HepG2 (cell line): ENCODE measurements at regions of chr21 and their contacts with region 1.

Region 1: DNA sequence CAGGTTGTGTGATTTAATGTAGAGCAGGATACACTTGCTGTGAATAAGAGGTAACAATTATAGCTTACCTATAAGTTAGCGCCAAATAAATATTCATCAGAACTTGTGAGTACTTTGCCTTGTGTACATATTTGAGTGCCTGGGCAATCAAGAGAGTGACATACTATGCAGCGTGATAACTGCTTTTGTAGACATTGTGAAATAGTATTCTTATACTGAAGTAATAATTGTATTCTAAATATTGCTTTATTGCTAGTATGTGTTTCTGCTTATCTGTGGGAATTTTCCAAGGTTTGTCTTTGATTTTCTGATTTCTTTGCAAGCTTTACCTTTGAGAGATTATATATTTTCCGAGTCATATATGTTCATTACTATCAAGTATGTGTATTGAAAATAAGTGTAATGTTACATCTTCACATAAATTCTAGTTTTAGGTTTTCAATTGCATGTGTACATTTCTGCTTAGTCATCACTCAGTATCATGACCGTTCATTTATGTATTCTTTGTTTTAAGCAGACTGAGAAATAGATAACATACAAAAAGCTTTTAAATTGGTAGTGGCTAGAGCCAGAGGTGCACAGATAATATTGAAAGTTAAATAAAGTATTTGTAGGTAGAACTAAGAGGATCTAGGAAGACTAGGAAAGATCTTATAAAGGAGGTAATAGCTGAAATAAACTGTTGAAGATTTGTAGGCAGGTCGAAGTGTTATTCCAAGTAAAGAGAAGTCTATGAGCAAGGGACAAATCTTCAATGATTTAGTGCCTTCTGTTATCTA is 19.5 kb downstream of the USP25 start:
- DNase-seq: peak; percentile 48
- ATAC-seq: peak; percentile 47
- H3K4me3 ChIP-seq: no peak overlapping the region
- H3K27ac ChIP-seq: peak overlapping the region; percentile 42
- H3K4me1 ChIP-seq: peaks cover 46% of the 10 kb centered on the region
- H3K27me3 ChIP-seq: no peaks in the 10 kb centered on the region
- CTCF ChIP-seq: no peak
- EP300 ChIP-seq: no peak
- POLR2A ChIP-seq: no peak
- RAD21 ChIP-seq: no peak

Region 2: DNA sequence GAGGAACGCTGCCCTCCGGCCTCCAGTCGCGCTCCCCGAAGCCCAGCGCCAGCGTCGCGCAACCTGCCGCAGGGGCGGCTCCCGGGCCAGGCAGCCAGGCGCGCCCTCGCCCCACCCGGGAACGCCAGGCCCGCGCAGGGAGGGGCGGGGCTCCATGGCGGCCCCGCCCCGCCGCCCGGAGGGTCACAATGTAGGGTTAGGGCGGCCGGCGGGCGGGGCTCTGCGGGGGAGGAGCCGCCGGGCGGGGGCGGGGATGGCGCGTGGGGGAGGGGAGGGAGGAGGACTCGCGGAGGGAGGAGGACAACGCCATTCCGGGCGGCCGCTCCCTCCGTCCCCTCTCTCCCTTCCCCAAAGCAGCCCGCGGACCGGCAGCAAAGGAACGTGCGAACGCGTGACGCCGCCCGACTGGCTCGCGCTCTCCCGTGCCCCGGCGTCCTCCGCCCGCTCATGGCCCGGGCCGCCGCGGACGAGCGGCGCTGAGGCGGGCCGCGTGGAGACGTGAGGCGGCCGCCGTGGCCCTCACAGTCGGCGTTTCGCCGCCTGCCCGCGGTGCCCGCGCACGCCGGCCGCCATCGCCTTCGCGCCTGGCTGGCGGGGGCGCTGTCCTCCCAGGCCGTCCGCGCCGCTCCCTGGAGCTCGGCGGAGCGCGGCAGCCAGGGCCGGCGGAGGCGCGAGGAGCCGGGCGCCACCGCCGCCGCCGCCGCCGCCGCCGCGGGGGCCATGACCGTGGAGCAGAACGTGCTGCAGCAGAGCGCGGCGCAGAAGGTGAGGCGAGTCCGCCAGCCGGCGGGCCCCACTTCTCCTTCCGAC is 19.4 kb before region 1 on chr21 and contains the start of gene USP25:
- CTCF ChIA-PET with region 1: no interaction called
- POLR2A ChIA-PET with region 1: interaction called, 3 read pairs
- in situ Hi-C with region 1: no loop called
- intact Hi-C with region 1: loop called (anchors 2 kb)
- DNase-seq: peak; percentile 68
- ATAC-seq: peak; percentile 91
- H3K4me3 ChIP-seq: peak within 1 kb of the TSS; percentile 80 to 93 (median 85)
- H3K27ac ChIP-seq: peak within 1 kb of the TSS; percentile 78
- H3K4me1 ChIP-seq: peaks cover 18% of the 10 kb centered on the region
- H3K27me3 ChIP-seq: peaks cover 0 to 7% of the 10 kb centered on the region in 2 experiments; a peak in 3 of 5 replicates
- CTCF ChIP-seq: peak; percentile 43; the same call in 1 of the 2 replicates
- EP300 ChIP-seq: no peak
- POLR2A ChIP-seq: peak; percentile 78 to 92
- RAD21 ChIP-seq: peak; percentile 71
- total RNA-seq, gene USP25: 26.3 and 34.5 TPM in 2 replicates